Colonic mucosa (tissue), 4 donors: ENCODE measurements at regions of chr10 and their contacts with region 1.

Region 1: GRCh38 chr10:125982260-125982948 is 86.0 kb downstream of the FANK1 start:
- DNase-seq: peak; percentile 56
- H3K4me3 ChIP-seq: no peak overlapping the region
- H3K27ac ChIP-seq: no peak overlapping the region
- H3K4me1 ChIP-seq: no peaks in the 10 kb centered on the region
- H3K27me3 ChIP-seq: no peaks in the 10 kb centered on the region
- CTCF ChIP-seq: peak; percentile 49

Region 2: DNA sequence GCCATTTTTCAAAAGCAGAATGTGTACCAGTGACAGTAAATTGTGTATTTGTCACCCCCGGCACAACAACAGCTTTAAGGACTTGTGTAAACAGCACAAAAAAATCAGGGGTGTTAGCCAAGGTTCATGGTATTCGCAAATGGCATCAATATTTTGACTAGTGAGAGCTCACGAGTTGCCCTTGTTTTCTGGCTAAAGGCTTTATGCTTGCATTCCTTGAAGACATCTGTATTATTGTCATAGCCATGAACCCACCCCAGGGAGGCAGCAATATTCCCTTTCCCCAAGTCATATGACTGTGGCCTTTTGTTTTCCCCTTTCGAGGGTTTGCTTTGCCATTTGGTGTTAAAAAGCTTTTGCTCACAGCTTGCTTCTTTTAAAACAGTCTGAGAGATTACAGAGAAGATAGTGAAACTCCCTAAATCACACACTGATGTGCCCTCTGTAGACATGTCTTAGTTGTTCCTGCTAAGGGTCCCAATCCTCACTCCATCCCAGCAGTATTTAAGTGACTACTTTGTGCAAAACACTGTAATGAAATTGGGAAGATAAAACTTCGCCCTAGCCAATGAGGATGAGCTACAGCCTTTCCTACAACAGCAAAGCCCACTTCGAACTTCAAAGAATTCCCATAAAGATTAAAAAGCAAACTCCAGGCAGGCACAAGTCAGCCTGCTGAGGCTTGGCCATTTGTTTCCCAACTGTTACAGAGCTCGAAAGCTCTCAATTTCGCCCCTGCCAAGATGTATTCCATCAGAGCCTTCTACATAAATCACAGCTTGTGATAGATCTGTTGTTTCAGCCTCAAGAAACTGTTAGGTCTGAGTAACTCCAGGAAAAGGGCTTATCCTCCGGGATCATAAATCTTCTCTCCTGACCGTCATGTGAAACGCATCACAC is 233.6 kb after region 1 on chr10:
- intact Hi-C with region 1: no loop called
- DNase-seq: no peak
- H3K4me3 ChIP-seq: no peak overlapping the region
- H3K27ac ChIP-seq: no peak overlapping the region
- H3K4me1 ChIP-seq: no peaks in the 10 kb centered on the region
- H3K27me3 ChIP-seq: no peaks in the 10 kb centered on the region
- CTCF ChIP-seq: no peak

Region 3: DNA sequence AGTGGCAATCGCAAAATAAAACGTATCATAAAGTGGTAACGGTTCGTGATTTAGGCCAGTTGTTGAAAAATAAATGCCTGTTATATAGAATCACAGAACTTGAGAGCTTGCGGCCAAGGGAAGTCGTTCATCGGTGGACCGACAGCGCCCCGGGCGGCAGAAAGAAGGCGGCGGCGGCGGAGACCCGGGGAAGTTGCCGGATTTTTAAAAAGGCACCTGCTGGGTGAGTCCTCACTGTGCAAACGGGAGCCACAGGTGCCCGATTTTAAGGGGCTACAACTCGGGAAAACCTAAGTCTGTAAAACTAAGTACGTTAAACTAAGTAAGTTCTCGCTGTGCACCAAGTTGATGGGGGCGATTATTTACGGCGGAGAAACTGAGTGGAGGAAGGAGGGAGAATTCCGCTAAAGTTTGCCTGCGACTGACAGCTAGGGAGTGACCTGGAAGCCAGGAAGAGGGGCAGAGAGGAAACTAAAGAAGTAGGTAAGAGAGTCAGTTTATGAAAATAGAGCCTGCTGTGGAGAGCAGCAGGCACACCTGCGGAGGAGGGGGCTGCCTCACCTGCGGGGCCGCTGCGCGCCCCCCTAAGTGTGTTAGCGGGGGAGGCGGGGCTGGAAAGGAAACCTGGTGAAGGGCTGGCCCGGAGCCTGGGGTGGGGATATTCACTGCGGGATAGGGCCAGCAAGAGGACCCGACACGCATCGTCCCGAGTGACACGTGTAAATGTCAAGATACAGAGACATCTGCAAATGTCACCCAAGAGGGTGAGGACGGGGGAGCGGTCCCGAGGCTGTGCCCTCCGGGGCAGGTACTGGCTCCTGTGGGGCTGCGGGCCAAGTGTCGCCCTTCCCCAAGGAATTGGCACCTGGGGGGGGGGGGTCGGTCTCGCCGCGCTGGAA is 404.9 kb after region 1 on chr10:
- intact Hi-C with region 1: loop called (anchors 5 kb)
- DNase-seq: peak; percentile 76
- H3K4me3 ChIP-seq: peak overlapping the region; percentile 30
- H3K27ac ChIP-seq: no peak overlapping the region
- H3K4me1 ChIP-seq: no peaks in the 10 kb centered on the region
- H3K27me3 ChIP-seq: peaks cover 18% of the 10 kb centered on the region
- CTCF ChIP-seq: peak; percentile 71

Region 4: GRCh38 chr10:126754966-126755365 is 772.6 kb after region 1 on chr10:
- intact Hi-C with region 1: loop called (anchors 10 kb)
- DNase-seq: no peak
- H3K4me3 ChIP-seq: no peak overlapping the region
- H3K27ac ChIP-seq: no peak overlapping the region
- H3K4me1 ChIP-seq: no peaks in the 10 kb centered on the region
- H3K27me3 ChIP-seq: no peaks in the 10 kb centered on the region
- CTCF ChIP-seq: no peak